Heart right ventricle (tissue), 16 donors: ENCODE measurements at regions of chr10 and their contacts with region 1.

Region 1: DNA sequence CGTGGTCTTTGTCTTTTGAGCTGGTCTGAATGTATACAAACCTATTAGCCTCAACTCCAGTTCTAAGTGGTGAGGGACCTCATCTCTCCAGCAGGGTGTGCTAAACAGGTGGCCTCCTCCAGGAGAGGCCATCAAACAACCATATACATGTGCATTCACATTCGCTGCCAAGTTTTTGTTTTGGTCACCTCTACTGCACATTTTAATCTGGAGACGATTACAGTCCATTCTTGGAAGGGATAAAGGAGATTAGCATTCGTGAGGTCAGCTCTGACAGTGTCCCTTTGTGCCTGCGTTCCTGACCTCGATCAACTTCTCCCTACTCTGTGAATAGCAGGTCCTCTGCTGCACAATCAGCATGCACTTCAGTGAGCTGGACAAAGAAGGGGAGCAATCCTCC is 60.8 kb downstream of the RHOBTB1 start:
- DNase-seq: peak in 1 of 2 donors; percentile 38
- ATAC-seq: peak; percentile 67 to 95 (median 90)
- H3K4me3 ChIP-seq: no peak overlapping the region
- H3K27ac ChIP-seq: peak overlapping the region in 7 of 10 donors; percentile 2 to 64 (median 52)
- H3K4me1 ChIP-seq: peaks cover 0 to 29% (median 11%) of the 10 kb centered on the region in 9 donors
- H3K27me3 ChIP-seq: no peaks in the 10 kb centered on the region
- CTCF ChIP-seq: peak; percentile 29 to 70 (median 55)

Region 2: GRCh38 chr10:60955957-60956425 is 72.8 kb after region 1 on chr10:
- intact Hi-C with region 1: loop called in 8 of 10 experiments (anchors 5 to 10 kb)
- DNase-seq: no peak
- ATAC-seq: no peak
- H3K4me3 ChIP-seq: no peak overlapping the region
- H3K27ac ChIP-seq: no peak overlapping the region
- H3K4me1 ChIP-seq: peaks cover 0 to 10% (median 0%) of the 10 kb centered on the region in 9 donors
- H3K27me3 ChIP-seq: no peaks in the 10 kb centered on the region
- CTCF ChIP-seq: no peak

Region 3: GRCh38 chr10:61063034-61063433 is 179.8 kb after region 1 on chr10:
- intact Hi-C with region 1: no loop called
- DNase-seq: peak in 1 of 2 donors; percentile 18
- ATAC-seq: peak in 1 of 8 donors; percentile 34
- H3K4me3 ChIP-seq: no peak overlapping the region
- H3K27ac ChIP-seq: no peak overlapping the region
- H3K4me1 ChIP-seq: peaks cover 0 to 5% (median 2%) of the 10 kb centered on the region in 9 donors
- H3K27me3 ChIP-seq: no peaks in the 10 kb centered on the region
- CTCF ChIP-seq: no peak